Calu3 (cell line): ENCODE measurements at regions of chr2 and their contacts with region 1.

Region 1: GRCh38 chr2:42117923-42118753 is 51.0 kb upstream of the EML4 start:
- DNase-seq: peak; percentile 29
- H3K4me3 Mint-ChIP-seq: no peak overlapping the region
- H3K27ac Mint-ChIP-seq: peak overlapping the region; percentile 8
- H3K4me1 Mint-ChIP-seq: peaks cover 23% of the 10 kb centered on the region
- H3K27me3 Mint-ChIP-seq: no peaks in the 10 kb centered on the region
- CTCF ChIP-seq: no peak

Region 2: DNA sequence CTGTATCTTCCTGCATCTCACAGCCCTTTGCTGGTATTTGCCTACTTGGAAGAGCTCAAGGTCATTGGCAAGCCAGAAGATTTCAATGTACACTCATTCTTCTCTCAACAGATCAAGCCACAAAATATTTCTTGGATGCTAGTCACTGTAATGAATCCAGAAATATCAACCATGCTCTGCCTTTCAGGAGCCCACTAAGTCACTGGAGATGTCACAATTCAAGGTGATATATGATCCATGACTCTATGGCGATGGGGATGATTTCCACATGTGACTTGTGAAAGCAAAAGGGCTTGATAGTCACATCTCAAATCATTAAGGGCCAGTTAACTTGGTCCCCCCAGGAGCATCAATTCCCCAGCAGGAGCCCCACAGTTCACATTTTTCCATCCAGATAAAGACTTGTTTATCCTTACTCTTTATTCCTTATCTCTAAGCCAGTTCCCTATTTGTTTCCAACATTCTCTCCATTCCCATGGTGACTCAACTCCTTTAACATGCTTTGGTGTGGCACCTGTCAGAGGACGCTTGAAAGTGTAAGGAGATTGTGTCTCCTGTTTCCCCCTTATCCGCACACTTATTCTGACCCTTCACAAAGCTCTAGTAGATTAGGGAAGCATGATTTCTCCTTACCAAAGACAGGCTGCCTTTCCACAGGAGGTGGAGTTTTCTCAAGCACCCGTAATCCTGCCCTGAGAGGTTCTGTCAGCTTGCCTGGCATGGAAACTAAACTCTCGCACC is 54.5 kb before region 1 on chr2:
- CTCF ChIA-PET with region 1: no interaction called
- intact Hi-C with region 1: no loop called
- DNase-seq: no peak
- H3K4me3 Mint-ChIP-seq: no peak overlapping the region
- H3K27ac Mint-ChIP-seq: no peak overlapping the region
- H3K4me1 Mint-ChIP-seq: peaks cover 14% of the 10 kb centered on the region
- H3K27me3 Mint-ChIP-seq: no peaks in the 10 kb centered on the region
- CTCF ChIP-seq: no peak

Region 3: GRCh38 chr2:42196403-42197267 is 78.5 kb after region 1 on chr2:
- CTCF ChIA-PET with region 1: no interaction called
- intact Hi-C with region 1: loop called (anchors 5 kb)
- DNase-seq: peak; percentile 47
- H3K4me3 Mint-ChIP-seq: no peak overlapping the region
- H3K27ac Mint-ChIP-seq: peak overlapping the region; percentile 45
- H3K4me1 Mint-ChIP-seq: peaks cover 62% of the 10 kb centered on the region
- H3K27me3 Mint-ChIP-seq: no peaks in the 10 kb centered on the region
- CTCF ChIP-seq: peak; percentile 47